ENCODE measurements at regions of chr4 and their contacts with region 1.

Region 1: GRCh38 chr4:23130845-23131244 is 438.1 kb downstream of the GBA3 start:
- DNase-seq: no peak
- H3K4me3 ChIP-seq: no peak overlapping the region
- H3K27ac ChIP-seq: no peak overlapping the region
- H3K4me1 ChIP-seq: no peaks in the 10 kb centered on the region
- H3K27me3 ChIP-seq: no peaks in the 10 kb centered on the region
- CTCF ChIP-seq: no peak
- EP300 ChIP-seq: no peak
- POLR2A ChIP-seq: no peak

Region 2: DNA sequence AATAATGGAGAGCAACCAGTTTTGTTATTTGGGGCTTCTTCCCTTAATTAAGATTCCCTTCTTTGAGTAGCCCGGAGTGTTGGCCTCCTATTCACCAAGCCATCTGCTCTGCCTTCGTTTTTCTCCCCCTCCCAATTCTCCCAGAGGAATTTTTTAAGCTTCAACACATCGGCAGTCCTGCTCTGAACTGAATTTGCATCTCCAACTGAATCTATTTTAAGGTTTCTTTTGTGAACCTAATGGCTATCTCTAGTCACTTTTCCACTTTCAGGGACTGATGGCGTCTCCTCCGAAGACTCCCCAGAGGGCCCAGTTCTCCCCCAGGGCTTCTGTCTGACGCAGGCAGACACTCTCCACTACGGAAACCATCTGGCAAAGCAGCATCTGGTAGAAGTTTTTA is 895.1 kb before region 1 on chr4:
- in situ Hi-C with region 1: no loop called
- intact Hi-C with region 1: no loop called
- DNase-seq: no peak
- H3K4me3 ChIP-seq: no peak overlapping the region
- H3K27ac ChIP-seq: no peak overlapping the region
- H3K4me1 ChIP-seq: peaks cover 0 to 8% (median 3%) of the 10 kb centered on the region in 4 donors
- H3K27me3 ChIP-seq: no peaks in the 10 kb centered on the region
- CTCF ChIP-seq: no peak
- EP300 ChIP-seq: no peak
- POLR2A ChIP-seq: no peak

Region 3: GRCh38 chr4:22287631-22288030 is 843.2 kb before region 1 on chr4:
- in situ Hi-C with region 1: no loop called
- intact Hi-C with region 1: no loop called
- DNase-seq: no peak
- H3K4me3 ChIP-seq: no peak overlapping the region
- H3K27ac ChIP-seq: no peak overlapping the region
- H3K4me1 ChIP-seq: no peaks in the 10 kb centered on the region
- H3K27me3 ChIP-seq: no peaks in the 10 kb centered on the region
- CTCF ChIP-seq: no peak
- EP300 ChIP-seq: no peak
- POLR2A ChIP-seq: no peak

Region 4: DNA sequence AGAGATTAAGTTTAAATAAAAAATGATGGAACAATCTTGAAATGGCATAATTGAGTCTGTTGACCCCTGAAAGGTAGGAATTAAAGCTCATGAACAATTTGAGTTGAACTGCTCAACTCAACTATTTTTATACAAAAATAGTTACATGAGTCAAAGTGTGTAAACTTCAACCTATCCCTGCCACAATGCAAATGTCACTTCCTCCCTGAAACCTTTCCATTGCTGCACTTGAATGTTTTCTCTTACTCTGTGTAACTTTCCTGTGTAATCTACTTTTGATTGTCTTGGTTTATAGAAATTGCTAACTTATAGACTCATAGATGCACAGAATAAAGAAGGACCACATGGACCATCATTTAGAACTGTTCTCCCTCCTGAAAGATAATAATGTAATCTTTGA is 219.6 kb before region 1 on chr4:
- in situ Hi-C with region 1: no loop called
- intact Hi-C with region 1: no loop called
- DNase-seq: no peak
- H3K4me3 ChIP-seq: no peak overlapping the region
- H3K27ac ChIP-seq: no peak overlapping the region
- H3K4me1 ChIP-seq: no peaks in the 10 kb centered on the region
- H3K27me3 ChIP-seq: no peaks in the 10 kb centered on the region
- CTCF ChIP-seq: no peak
- EP300 ChIP-seq: no peak
- POLR2A ChIP-seq: no peak

Region 5: GRCh38 chr4:23202712-23203247 is 71.9 kb after region 1 on chr4:
- in situ Hi-C with region 1: no loop called
- intact Hi-C with region 1: loop called (anchors 2 kb)
- DNase-seq: peak; percentile 20
- H3K4me3 ChIP-seq: no peak overlapping the region
- H3K27ac ChIP-seq: peak overlapping the region in 1 of 4 donors; percentile 53
- H3K4me1 ChIP-seq: no peaks in the 10 kb centered on the region
- H3K27me3 ChIP-seq: no peaks in the 10 kb centered on the region
- CTCF ChIP-seq: no peak
- EP300 ChIP-seq: no peak
- POLR2A ChIP-seq: no peak

Measured in transverse colon (tissue), 4 donors.